Activated CD4-positive, alpha-beta T cell treated with anti-CD3 and anti-CD28 coated beads for 36 hours (primary cell): ENCODE measurements at regions of chrX and their contacts with region 1.

Region 1: DNA sequence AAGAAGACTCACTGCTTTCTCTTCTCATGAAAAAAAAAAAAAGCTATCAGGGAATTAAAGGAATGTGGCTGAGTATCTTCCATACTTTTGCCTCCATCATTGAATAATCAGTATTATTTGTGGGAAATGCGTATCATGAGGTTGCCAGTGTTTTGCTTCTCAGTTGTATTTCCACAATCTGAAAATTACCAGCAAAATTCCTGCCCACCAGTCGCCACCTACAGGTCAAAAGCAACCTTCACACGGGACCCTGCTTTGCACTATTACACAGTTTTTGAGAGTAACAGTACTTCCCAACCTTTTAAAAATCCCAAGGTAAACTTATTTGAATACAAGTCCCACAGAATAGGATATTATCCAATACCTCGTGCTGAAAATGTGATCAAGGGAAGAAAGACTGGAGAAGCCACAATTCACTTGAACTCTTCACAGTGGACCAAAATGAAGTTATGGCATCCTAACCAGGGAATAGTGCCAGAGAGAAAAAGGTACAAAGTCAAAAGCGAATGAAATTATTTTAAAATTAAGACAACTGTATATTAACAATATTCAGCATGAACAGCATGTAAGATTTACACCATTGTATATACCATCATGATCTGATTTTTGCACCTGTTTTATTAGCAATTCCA is 30.4 kb downstream of the PGRMC1 start:
- DNase-seq: peak; percentile 35
- ATAC-seq: no peak
- H3K4me3 Mint-ChIP-seq: no peak overlapping the region
- H3K27ac Mint-ChIP-seq: no peak overlapping the region
- H3K4me1 Mint-ChIP-seq: no peaks in the 10 kb centered on the region
- H3K27me3 Mint-ChIP-seq: no peaks in the 10 kb centered on the region

Region 2: DNA sequence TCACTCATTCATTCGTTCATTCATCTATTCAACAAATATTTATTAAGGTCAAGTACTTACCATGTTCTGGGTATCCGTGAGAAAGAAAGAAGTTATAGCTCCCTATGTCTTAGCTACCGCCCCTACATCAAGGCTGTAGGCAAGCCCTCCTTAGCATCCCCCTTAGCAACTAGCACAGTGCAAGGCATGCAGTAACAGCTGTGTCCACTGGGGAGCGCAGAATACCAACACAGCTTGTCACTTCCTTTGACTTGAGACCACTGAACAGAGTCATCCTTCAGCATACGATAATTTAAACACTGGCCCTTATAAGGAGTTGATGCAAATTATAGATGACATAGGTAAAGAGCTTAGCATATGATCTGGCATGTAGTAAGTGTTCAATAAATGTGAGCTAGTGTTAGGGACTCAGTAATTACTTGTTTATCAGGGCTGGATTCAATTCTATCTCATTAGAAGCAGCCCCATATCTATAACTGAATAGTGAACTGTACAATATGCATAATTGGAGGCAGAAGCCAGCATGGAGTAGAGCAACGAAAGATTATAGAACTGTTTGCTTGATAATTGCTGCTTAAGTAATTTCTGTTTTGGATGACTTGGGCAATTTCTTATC is 147.6 kb before region 1 on chrX:
- CTCF ChIA-PET with region 1: interaction called, 3 read pairs
- POLR2A ChIA-PET with region 1: no interaction called
- intact Hi-C with region 1: loop called (anchors 1 to 2 kb)
- DNase-seq: peak; percentile 64
- ATAC-seq: peak; percentile 83
- H3K4me3 Mint-ChIP-seq: no peak overlapping the region
- H3K27ac Mint-ChIP-seq: no peak overlapping the region
- H3K4me1 Mint-ChIP-seq: no peaks in the 10 kb centered on the region
- H3K27me3 Mint-ChIP-seq: peaks cover 3% of the 10 kb centered on the region

Region 3: GRCh38 chrX:119145241-119145653 is 121.2 kb before region 1 on chrX:
- CTCF ChIA-PET with region 1: interaction called, 4 read pairs
- POLR2A ChIA-PET with region 1: no interaction called
- intact Hi-C with region 1: loop called in 1 of 2 experiments (anchors 10 kb)
- DNase-seq: peak; percentile 5
- ATAC-seq: no peak
- H3K4me3 Mint-ChIP-seq: no peak overlapping the region
- H3K27ac Mint-ChIP-seq: no peak overlapping the region
- H3K4me1 Mint-ChIP-seq: no peaks in the 10 kb centered on the region
- H3K27me3 Mint-ChIP-seq: peaks cover 2% of the 10 kb centered on the region